Activated B cell treated with CpG ODN at 0.5 μM for 24 hours (primary cell): ENCODE measurements at regions of chr10 and their contacts with region 1.

Region 1: GRCh38 chr10:101120884-101121653 is 10.0 kb upstream of the TLX1 start:
- DNase-seq: peak; percentile 40
- ATAC-seq: peak; percentile 89
- H3K4me3 Mint-ChIP-seq: peak overlapping the region; percentile 97
- H3K27ac Mint-ChIP-seq: peak overlapping the region; percentile 68
- H3K4me1 Mint-ChIP-seq: peaks cover 29% of the 10 kb centered on the region
- H3K27me3 Mint-ChIP-seq: peaks cover 38% of the 10 kb centered on the region
- CTCF ChIP-seq: no peak

Region 2: DNA sequence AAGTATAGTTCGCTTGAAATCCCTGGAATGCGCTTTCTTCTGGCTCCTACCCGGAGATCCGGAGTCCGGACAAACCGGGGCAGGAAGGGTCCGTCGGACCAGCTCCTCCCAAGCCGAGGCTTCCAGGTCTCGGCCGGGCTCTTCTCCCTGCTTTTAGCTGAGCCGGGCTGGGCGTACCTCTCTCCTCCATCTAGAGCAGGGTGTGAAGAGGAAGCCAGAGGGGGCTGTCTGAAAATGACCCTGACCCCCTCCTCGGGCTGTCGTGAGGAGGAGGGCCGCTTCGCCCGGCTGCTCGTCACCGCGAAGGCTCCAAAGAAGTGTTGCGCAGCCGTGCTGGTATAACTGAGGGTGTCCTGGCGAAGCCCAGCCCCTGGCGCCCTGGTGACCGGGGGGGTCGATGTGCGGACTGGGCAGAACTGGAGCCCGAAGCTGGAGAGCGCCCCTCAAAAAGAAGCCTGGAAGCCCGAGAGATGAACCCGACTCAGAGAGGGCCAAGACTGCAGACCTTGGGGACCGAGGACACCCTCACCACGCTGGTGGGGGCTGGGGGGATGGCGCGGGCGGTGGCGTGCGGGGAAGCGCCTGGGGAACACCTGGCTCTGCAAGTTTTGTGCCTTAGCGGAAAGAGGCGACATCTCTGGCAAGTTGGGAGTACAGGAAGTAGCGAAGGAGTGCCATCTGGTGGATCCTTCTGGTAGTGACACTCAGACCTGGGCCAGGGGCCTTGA is 53.5 kb before region 1 on chr10:
- CTCF ChIA-PET with region 1: no interaction called
- POLR2A ChIA-PET with region 1: interaction called, 3 read pairs
- intact Hi-C with region 1: loop called (anchors 5 kb)
- DNase-seq: peak; percentile 63
- ATAC-seq: peak; percentile 64
- H3K4me3 Mint-ChIP-seq: peak overlapping the region; percentile 92
- H3K27ac Mint-ChIP-seq: no peak overlapping the region
- H3K4me1 Mint-ChIP-seq: peaks cover 51% of the 10 kb centered on the region
- H3K27me3 Mint-ChIP-seq: peaks cover 8% of the 10 kb centered on the region
- CTCF ChIP-seq: peak; percentile 76

Region 3: GRCh38 chr10:101095542-101096213 is 25.4 kb before region 1 on chr10:
- CTCF ChIA-PET with region 1: interaction called, 6 read pairs
- POLR2A ChIA-PET with region 1: no interaction called
- intact Hi-C with region 1: loop called (anchors 2 kb)
- DNase-seq: peak; percentile 63
- ATAC-seq: peak; percentile 99
- H3K4me3 Mint-ChIP-seq: no peak overlapping the region
- H3K27ac Mint-ChIP-seq: no peak overlapping the region
- H3K4me1 Mint-ChIP-seq: no peaks in the 10 kb centered on the region
- H3K27me3 Mint-ChIP-seq: peaks cover 53% of the 10 kb centered on the region
- CTCF ChIP-seq: no peak

Region 4: GRCh38 chr10:101106351-101106750 is 14.7 kb before region 1 on chr10:
- CTCF ChIA-PET with region 1: no interaction called
- POLR2A ChIA-PET with region 1: no interaction called
- intact Hi-C with region 1: no loop called
- DNase-seq: no peak
- ATAC-seq: no peak
- H3K4me3 Mint-ChIP-seq: no peak overlapping the region
- H3K27ac Mint-ChIP-seq: no peak overlapping the region
- H3K4me1 Mint-ChIP-seq: no peaks in the 10 kb centered on the region
- H3K27me3 Mint-ChIP-seq: peaks cover 38% of the 10 kb centered on the region
- CTCF ChIP-seq: no peak